Heart left ventricle (tissue), 16 donors: ENCODE measurements at regions of chr1 and their contacts with region 1.

Region 1: GRCh38 chr1:170765712-170766330 is 101.9 kb downstream of the PRRX1 start:
- DNase-seq: no peak
- ATAC-seq: peak in 3 of 4 donors; percentile 45 to 71 (median 49)
- H3K4me3 ChIP-seq: no peak overlapping the region
- H3K27ac ChIP-seq: no peak overlapping the region
- H3K4me1 ChIP-seq: peaks cover 0 to 6% (median 0%) of the 10 kb centered on the region in 12 donors
- H3K27me3 ChIP-seq: no peaks in the 10 kb centered on the region
- CTCF ChIP-seq: peak; percentile 33 to 72 (median 56)
- POLR2A ChIP-seq: no peak

Region 2: DNA sequence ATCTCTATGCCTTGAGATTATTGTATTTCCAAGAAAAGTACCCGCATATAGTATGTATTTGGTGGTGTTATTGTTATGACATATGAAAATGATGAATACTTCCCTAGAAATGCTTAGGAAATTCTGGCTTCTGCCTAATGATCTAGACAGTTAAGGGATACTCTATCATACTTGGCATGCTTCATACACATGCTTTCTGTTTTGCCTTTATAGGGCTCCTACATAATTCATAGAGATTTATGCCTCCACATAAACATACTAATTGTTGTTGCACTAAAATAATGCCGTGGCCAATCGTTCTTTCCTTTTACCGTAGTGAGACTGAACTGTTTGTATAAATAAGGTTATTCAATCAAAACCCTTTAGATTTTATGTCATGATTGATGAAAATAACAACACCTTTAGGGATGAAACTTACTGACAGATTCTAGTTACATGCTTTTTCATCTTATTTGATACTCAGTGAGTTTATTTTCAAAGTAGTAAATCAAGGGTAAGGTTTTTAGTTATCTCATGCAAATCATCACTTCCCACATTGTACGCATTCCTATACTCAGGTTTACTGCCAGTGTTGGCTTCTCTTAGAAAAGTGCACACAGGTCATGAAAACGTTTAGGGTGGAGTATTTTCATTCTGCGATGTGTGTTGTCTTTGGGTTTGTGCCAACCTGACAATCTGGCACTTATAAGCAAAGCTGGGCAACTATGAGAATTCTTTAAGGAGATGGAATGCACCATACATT is 831.7 kb before region 1 on chr1:
- intact Hi-C with region 1: loop called in 3 of 10 experiments (anchors 10 kb)
- DNase-seq: no peak
- ATAC-seq: no peak
- H3K4me3 ChIP-seq: no peak overlapping the region
- H3K27ac ChIP-seq: no peak overlapping the region
- H3K4me1 ChIP-seq: peaks cover 0 to 8% (median 0%) of the 10 kb centered on the region in 12 donors
- H3K27me3 ChIP-seq: no peaks in the 10 kb centered on the region
- CTCF ChIP-seq: no peak
- POLR2A ChIP-seq: no peak

Region 3: DNA sequence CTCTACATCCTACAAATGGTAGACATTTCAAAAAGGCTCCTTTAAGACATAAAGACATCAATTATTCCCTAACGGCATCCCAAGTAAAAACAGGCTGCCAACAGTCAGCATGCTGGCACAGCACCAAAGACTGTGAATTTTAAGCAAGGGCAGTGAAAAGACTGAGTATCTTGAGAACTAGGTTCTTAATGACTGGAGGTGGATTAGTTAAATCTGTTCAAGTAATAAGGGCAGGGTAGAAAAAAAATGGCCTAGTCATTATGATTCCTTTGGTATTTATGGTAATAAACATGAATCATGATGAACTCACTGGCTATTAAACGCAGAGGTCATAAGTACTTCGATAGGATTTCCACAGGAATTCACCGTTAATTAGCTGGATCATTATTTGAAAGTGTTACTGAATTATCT is 766.5 kb before region 1 on chr1:
- intact Hi-C with region 1: loop called in 2 of 10 experiments (anchors 10 kb)
- DNase-seq: peak in 2 of 5 donors; percentile 6 to 35
- ATAC-seq: peak in 1 of 4 donors; percentile 22
- H3K4me3 ChIP-seq: no peak overlapping the region
- H3K27ac ChIP-seq: peak overlapping the region in 6 of 12 donors; percentile 12 to 50 (median 32)
- H3K4me1 ChIP-seq: peaks cover 0 to 16% (median 0%) of the 10 kb centered on the region in 12 donors
- H3K27me3 ChIP-seq: no peaks in the 10 kb centered on the region
- CTCF ChIP-seq: no peak
- POLR2A ChIP-seq: no peak

Region 4: DNA sequence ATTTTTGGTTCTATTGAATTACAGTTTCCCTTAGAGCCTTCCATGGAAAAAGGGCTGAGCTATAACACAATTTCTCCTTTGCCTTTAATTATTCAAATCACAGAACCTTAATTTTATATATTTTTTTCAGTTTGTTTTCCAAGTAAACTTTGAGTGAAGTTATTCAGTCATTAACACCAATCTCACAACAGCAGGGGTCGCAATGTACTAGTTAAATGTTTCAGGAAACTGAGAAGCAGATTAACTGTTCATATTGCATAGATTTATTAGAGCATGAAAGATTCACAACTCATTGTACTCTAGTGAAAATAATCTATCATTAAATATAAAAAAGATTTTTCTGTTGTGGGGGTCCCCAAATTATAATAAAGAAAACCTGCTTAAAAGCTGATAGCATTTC is 755.4 kb before region 1 on chr1:
- intact Hi-C with region 1: loop called in 7 of 10 experiments (anchors 5 to 10 kb)
- DNase-seq: peak in 4 of 5 donors; percentile 25 to 40 (median 32)
- ATAC-seq: no peak
- H3K4me3 ChIP-seq: no peak overlapping the region
- H3K27ac ChIP-seq: no peak overlapping the region
- H3K4me1 ChIP-seq: no peaks in the 10 kb centered on the region
- H3K27me3 ChIP-seq: no peaks in the 10 kb centered on the region
- CTCF ChIP-seq: peak; percentile 7 to 66 (median 50)
- POLR2A ChIP-seq: no peak

Region 5: GRCh38 chr1:170555370-170555769 is 210.5 kb before region 1 on chr1:
- intact Hi-C with region 1: no loop called
- DNase-seq: no peak
- ATAC-seq: no peak
- H3K4me3 ChIP-seq: no peak overlapping the region
- H3K27ac ChIP-seq: no peak overlapping the region
- H3K4me1 ChIP-seq: no peaks in the 10 kb centered on the region
- H3K27me3 ChIP-seq: no peaks in the 10 kb centered on the region
- CTCF ChIP-seq: no peak
- POLR2A ChIP-seq: no peak

Region 6: GRCh38 chr1:170670802-170671628 is 94.8 kb before region 1 on chr1:
- intact Hi-C with region 1: loop called in 5 of 10 experiments (anchors 5 to 10 kb)
- DNase-seq: peak in 4 of 5 donors; percentile 53 to 64 (median 56)
- ATAC-seq: peak; percentile 14 to 66 (median 46)
- H3K4me3 ChIP-seq: peak overlapping the region in 3 of 12 donors; percentile 16 to 25 (median 19)
- H3K27ac ChIP-seq: peak overlapping the region in 3 of 12 donors; percentile 3 to 15 (median 4)
- H3K4me1 ChIP-seq: peaks cover 0 to 67% (median 10%) of the 10 kb centered on the region in 12 donors
- H3K27me3 ChIP-seq: peaks cover 0 to 57% (median 4%) of the 10 kb centered on the region in 9 donors
- CTCF ChIP-seq: peak; percentile 21 to 72 (median 55)
- POLR2A ChIP-seq: no peak

Region 7: DNA sequence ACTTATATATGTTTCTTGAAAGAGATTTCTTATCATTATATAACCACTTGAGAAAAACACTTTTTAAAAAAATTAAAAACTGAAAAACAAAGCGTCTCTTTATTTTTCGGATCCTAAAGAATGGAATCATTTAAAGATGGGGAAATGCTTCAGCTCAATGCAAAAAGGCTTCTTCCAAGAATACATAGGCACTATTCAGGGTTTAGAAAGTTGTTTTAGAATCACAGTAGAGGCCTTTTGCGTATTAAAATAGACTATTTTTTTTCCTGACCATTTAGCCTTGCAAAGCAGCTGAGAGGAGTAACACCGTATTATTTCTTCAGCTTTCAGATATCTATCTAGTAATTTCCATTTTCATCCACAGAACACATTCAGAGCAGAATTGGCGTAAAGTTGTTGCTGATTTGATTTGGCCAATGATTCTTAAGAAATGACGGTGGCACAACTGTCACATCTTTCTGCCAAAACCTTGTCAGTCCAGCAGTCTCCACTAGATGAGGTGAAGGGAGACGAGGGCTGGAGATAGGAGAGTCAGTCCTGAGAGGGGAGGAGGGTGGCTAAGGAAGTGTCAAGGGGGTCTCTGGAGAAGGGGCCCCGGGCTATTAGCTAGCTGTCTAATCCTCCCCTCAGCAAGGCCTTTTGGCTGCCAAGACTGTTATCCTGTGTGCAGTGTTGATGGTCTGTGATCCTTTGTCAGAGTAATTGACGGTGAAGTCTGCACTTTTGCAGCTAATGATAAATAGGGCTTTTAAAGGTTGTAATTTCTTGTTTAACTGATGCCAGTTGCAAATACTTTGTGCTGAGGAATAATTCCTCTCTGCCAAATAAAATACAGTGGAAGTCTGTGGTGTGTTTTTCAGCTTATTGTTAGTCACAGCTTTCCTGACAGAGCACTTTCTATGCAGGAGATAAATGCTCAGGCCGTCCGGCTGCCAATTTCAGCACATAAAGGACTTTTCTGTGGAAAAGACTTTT is 67.2 kb before region 1 on chr1:
- intact Hi-C with region 1: loop called in 1 of 10 experiments (anchors 10 kb)
- DNase-seq: no peak
- ATAC-seq: peak in 3 of 4 donors; percentile 58 to 68 (median 60)
- H3K4me3 ChIP-seq: peak overlapping the region in 4 of 12 donors; percentile 0 to 27 (median 1)
- H3K27ac ChIP-seq: peak overlapping the region in 11 of 12 donors; percentile 23 to 81 (median 65)
- H3K4me1 ChIP-seq: peaks cover 0 to 91% (median 55%) of the 10 kb centered on the region in 12 donors
- H3K27me3 ChIP-seq: no peaks in the 10 kb centered on the region
- CTCF ChIP-seq: no peak
- POLR2A ChIP-seq: no peak

Region 8: DNA sequence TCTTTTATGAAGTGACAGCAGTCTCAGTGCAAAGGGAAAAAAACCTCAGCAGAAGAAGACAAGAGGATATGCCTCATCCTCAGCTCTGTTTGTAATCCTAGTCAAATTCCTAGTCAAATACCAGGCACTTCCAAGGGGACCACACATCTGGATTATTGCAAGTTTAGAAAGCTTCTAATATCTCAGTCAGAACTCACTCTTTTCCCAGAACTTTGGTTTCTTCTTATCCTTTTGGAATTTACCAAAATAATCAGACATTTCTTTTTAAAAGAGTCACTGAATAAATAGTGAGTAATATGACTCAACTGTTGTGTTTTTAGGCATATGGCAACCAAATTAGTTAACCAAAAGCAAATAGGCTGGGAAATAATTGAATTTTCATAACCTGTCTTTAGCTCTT is 54.1 kb before region 1 on chr1:
- intact Hi-C with region 1: no loop called
- DNase-seq: no peak
- ATAC-seq: peak in 1 of 4 donors; percentile 68
- H3K4me3 ChIP-seq: no peak overlapping the region
- H3K27ac ChIP-seq: peak overlapping the region in 3 of 12 donors; percentile 4 to 50 (median 32)
- H3K4me1 ChIP-seq: peaks cover 0 to 35% (median 8%) of the 10 kb centered on the region in 12 donors
- H3K27me3 ChIP-seq: no peaks in the 10 kb centered on the region
- CTCF ChIP-seq: no peak
- POLR2A ChIP-seq: no peak

Region 9: GRCh38 chr1:171623651-171624331 is 858.0 kb after region 1 on chr1:
- intact Hi-C with region 1: no loop called
- DNase-seq: no peak
- ATAC-seq: no peak
- H3K4me3 ChIP-seq: no peak overlapping the region
- H3K27ac ChIP-seq: no peak overlapping the region
- H3K4me1 ChIP-seq: no peaks in the 10 kb centered on the region
- H3K27me3 ChIP-seq: no peaks in the 10 kb centered on the region
- CTCF ChIP-seq: no peak
- POLR2A ChIP-seq: no peak